CD4-positive, alpha-beta T cell (primary cell): ENCODE measurements at regions of chr16 and their contacts with region 1.

Region 1: GRCh38 chr16:68931196-68931595 is 87.9 kb downstream of the TANGO6 start:
- DNase-seq: no peak
- ATAC-seq: no peak
- H3K4me3 ChIP-seq: no peak overlapping the region
- H3K4me3 Mint-ChIP-seq: no peak overlapping the region
- H3K27ac ChIP-seq: no peak overlapping the region
- H3K27ac Mint-ChIP-seq: no peak overlapping the region
- H3K4me1 ChIP-seq: no peaks in the 10 kb centered on the region
- H3K4me1 Mint-ChIP-seq: no peaks in the 10 kb centered on the region
- H3K27me3 ChIP-seq: no peaks in the 10 kb centered on the region
- H3K27me3 Mint-ChIP-seq: no peaks in the 10 kb centered on the region
- CTCF ChIP-seq: no peak

Region 2: GRCh38 chr16:68884861-68885720 is 46.1 kb before region 1 on chr16:
- CTCF ChIA-PET with region 1: no interaction called
- POLR2A ChIA-PET with region 1: no interaction called
- intact Hi-C with region 1: loop called in 1 of 2 experiments (anchors 5 kb)
- DNase-seq: no peak
- ATAC-seq: no peak
- H3K4me3 ChIP-seq: no peak overlapping the region
- H3K4me3 Mint-ChIP-seq: no peak overlapping the region
- H3K27ac ChIP-seq: no peak overlapping the region
- H3K27ac Mint-ChIP-seq: no peak overlapping the region
- H3K4me1 ChIP-seq: no peaks in the 10 kb centered on the region
- H3K4me1 Mint-ChIP-seq: no peaks in the 10 kb centered on the region
- H3K27me3 ChIP-seq: no peaks in the 10 kb centered on the region
- H3K27me3 Mint-ChIP-seq: no peaks in the 10 kb centered on the region
- CTCF ChIP-seq: no peak